MCF 10A (cell line): ENCODE measurements at regions of chr17 and their contacts with region 1.

Region 1: GRCh38 chr17:72725433-72726068 is 366.9 kb downstream of the SLC39A11 start:
- DNase-seq: peak; percentile 72
- H3K4me3 Mint-ChIP-seq: no peak overlapping the region
- H3K27ac Mint-ChIP-seq: no peak overlapping the region
- H3K4me1 Mint-ChIP-seq: peaks cover 19% of the 10 kb centered on the region
- H3K27me3 Mint-ChIP-seq: no peaks in the 10 kb centered on the region
- CTCF ChIP-seq: peak; percentile 78

Region 2: DNA sequence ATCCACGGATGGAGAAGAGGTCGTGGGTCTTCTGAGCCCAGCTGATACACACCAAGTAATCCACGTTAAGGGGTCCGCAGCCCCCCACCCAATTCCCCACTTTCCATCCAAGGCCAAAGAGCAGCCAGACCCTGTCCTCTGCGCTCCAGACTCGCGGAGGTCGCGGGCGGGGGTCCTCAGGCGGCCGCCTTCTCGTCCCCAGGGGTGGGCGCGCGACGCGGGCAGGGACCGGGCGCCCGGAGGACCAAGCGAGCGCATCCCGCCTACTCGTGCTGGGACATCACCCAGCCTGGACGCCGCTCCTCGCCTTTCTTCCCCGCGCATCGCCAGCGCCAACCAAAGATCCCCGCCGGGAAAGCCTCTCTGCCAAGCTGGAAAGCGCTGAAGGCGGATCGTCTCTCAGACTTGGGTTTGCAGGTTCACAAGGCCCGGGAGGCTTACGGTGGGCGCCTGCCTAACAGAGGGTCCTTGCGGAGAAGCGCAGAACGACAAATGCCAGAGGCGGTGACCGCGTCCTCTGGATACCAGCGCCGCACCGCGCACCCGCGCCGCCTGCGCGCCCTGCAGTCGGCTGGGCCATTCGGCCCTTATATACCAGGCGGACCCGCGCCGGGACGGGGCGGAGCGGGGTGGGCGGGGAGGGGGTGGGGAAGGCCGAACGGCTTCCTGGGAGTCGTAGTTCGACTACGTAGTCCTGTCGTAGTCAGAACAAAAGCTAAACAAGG is 133.1 kb before region 1 on chr17:
- CTCF ChIA-PET with region 1: interaction called, 11 read pairs
- POLR2A ChIA-PET with region 1: interaction called, 15 read pairs
- intact Hi-C with region 1: no loop called
- DNase-seq: peak; percentile 86
- H3K4me3 Mint-ChIP-seq: peak overlapping the region; percentile 91
- H3K27ac Mint-ChIP-seq: peak overlapping the region; percentile 90
- H3K4me1 Mint-ChIP-seq: peaks cover 11% of the 10 kb centered on the region
- H3K27me3 Mint-ChIP-seq: no peaks in the 10 kb centered on the region
- CTCF ChIP-seq: no peak

Region 3: GRCh38 chr17:72985881-72986720 is 260.6 kb after region 1 on chr17:
- CTCF ChIA-PET with region 1: interaction called, 3 read pairs
- POLR2A ChIA-PET with region 1: no interaction called
- intact Hi-C with region 1: loop called (anchors 5 kb)
- DNase-seq: peak; percentile 82
- H3K4me3 Mint-ChIP-seq: no peak overlapping the region
- H3K27ac Mint-ChIP-seq: no peak overlapping the region
- H3K4me1 Mint-ChIP-seq: no peaks in the 10 kb centered on the region
- H3K27me3 Mint-ChIP-seq: no peaks in the 10 kb centered on the region
- CTCF ChIP-seq: peak; percentile 84

Region 4: DNA sequence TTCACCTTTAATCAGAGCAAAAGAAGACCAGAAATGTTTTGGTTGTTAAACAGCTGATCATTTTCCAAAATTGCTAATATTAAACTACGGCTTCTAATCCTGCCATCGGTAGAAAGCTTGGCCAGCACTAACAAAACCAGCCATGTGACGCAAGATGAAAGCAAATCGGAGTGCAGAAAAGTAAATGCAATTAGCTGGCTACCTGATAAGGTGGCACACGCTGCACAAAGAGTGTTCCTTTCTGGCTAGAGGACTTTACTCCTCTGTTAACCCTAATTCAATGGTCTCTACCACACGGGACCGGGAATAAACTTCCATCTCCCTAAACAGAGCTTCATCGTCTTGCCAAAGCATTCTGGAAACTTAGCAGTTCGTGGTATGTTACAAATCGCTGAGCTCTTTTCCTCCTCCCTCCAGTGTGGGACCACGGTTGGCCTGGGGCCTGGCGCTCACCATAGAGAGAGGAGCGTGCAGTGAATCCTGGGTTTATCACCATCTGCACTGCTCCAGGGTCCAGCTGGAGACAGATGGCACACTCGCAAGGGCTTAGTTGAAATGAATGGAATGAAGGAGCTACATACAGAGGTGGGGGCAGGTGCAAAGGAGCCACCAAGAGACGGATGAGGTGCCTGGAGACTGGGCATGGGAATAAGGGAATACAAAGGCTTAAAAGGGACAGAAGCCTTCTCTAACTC is 457.2 kb after region 1 on chr17:
- CTCF ChIA-PET with region 1: interaction called, 130 read pairs
- POLR2A ChIA-PET with region 1: interaction called, 3 read pairs
- intact Hi-C with region 1: no loop called
- DNase-seq: no peak
- H3K4me3 Mint-ChIP-seq: no peak overlapping the region
- H3K27ac Mint-ChIP-seq: no peak overlapping the region
- H3K4me1 Mint-ChIP-seq: no peaks in the 10 kb centered on the region
- H3K27me3 Mint-ChIP-seq: no peaks in the 10 kb centered on the region
- CTCF ChIP-seq: no peak

Region 5: GRCh38 chr17:73247726-73248125 is 522.2 kb after region 1 on chr17:
- CTCF ChIA-PET with region 1: interaction called, 12 read pairs
- POLR2A ChIA-PET with region 1: no interaction called
- intact Hi-C with region 1: no loop called
- DNase-seq: no peak
- H3K4me3 Mint-ChIP-seq: no peak overlapping the region
- H3K27ac Mint-ChIP-seq: no peak overlapping the region
- H3K4me1 Mint-ChIP-seq: no peaks in the 10 kb centered on the region
- H3K27me3 Mint-ChIP-seq: no peaks in the 10 kb centered on the region
- CTCF ChIP-seq: no peak

Region 6: DNA sequence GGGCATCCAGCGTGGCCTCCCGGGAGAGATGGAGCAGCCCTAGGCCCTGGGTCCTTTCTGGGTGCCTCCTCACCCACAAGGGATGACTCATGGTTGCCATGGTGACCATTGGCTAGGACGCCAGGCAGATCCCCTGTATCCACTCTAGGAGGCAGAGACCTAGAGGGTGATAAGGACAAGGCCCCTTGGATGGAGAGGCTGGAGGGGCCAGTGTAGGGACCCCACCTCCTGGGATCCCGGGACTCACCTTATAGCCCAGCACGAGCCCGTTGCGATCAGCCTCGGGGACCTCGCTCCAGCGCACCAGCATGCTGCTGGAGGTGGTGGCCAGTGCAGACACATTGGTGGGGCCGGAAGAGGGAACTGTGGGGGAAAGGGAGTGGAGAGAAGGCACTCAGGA is 668.4 kb after region 1 on chr17:
- CTCF ChIA-PET with region 1: no interaction called
- POLR2A ChIA-PET with region 1: no interaction called
- intact Hi-C with region 1: no loop called
- DNase-seq: peak; percentile 48
- H3K4me3 Mint-ChIP-seq: no peak overlapping the region
- H3K27ac Mint-ChIP-seq: no peak overlapping the region
- H3K4me1 Mint-ChIP-seq: no peaks in the 10 kb centered on the region
- H3K27me3 Mint-ChIP-seq: peaks cover 27% of the 10 kb centered on the region
- CTCF ChIP-seq: no peak